ENCODE measurements at regions of chr9 and their contacts with region 1.

Region 1: DNA sequence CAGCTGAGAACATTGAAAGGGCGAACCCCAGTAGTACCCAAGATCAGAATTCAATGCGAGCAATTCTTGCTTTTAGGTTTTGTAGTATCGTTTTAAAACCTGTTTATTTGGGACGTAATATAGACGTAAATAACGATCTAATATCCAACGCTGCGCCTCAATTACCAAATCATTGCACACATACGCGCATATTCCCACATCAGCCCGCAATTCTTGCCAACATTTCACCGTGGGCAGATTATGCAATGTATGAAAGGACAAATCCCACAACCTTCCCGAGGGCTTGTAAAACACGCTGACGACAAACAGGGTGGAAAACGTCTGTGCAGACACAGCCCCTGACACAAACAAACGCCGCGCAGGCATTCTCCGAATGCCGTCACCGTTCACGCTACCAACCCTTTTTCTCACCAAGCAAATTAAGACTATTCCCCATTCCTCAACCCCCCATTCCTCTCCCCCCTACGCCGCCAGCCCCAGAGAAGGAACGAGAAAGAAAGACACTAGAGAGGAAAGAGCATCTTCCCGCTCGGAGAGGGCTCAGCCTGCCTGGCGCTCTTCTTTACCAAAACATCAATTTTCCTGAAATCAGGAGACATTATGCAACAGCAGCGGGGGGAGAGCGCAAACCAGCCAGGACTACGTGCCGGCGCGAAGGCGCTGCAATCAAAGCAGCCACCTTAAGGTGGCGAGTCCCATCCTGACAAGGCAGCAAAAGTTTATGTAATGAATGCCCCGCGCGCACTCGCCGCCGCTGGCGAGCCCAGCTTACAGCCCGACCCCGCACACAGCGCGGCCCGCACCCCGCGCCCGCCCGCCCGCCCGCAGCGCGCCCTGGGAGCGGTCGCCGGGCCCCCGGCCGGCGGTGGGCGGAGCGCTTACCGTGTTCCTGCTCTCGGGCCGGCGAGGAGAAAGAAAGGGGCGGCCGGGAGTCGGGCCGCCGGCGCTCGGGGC is 597 bp downstream of the NFIL3 start:
- DNase-seq: peak; percentile 60 to 80
- ATAC-seq: peak; percentile 12 to 40 (median 26)
- H3K4me3 ChIP-seq: peak overlapping the region; percentile 87
- H3K27ac ChIP-seq: peak overlapping the region; percentile 95
- H3K4me1 ChIP-seq: peaks cover 24% of the 10 kb centered on the region
- H3K27me3 ChIP-seq: no peaks in the 10 kb centered on the region
- CTCF ChIP-seq: peak; percentile 39

Region 2: DNA sequence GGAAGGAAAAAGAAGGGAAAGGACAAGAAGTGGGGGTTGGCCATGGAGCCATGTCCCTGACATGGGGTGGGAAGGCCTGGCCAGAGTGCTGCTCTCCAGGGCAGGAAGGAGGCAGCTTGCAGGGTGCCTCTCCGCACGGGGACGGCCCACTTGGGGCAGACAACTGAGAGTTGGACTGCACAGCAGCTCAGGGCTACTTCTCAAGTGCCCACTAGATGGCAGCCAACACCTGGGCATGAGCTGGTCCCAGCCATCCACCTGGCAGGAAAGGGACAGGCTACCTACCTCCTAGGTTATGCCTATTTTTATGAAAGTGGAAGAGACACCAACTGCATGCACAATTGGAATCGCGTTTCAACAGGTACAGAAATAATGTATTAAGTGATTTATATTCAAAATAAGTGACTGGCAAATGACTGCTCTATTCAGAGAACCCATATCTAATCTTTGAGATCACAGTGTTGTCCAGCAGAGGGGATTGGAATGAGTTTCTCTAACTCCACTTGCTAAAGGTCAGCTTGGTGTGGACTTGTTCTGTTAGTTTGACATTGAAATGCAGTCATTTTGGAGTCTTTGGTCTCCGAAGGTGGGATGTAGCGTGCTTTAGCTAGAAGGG is 508.1 kb before region 1 on chr9:
- intact Hi-C with region 1: loop called (anchors 2 kb)
- DNase-seq: peak; percentile 67 to 84
- ATAC-seq: peak; percentile 84 to 96 (median 88)
- H3K4me3 ChIP-seq: no peak overlapping the region
- H3K27ac ChIP-seq: no peak overlapping the region
- H3K4me1 ChIP-seq: peaks cover 8% of the 10 kb centered on the region
- H3K27me3 ChIP-seq: no peaks in the 10 kb centered on the region
- CTCF ChIP-seq: peak; percentile 92

Region 3: GRCh38 chr9:91036826-91037510 is 386.1 kb before region 1 on chr9:
- intact Hi-C with region 1: loop called in 1 of 2 experiments (anchors 2 kb)
- DNase-seq: peak; percentile 79 to 88
- ATAC-seq: peak; percentile 93 to 99 (median 96)
- H3K4me3 ChIP-seq: no peak overlapping the region
- H3K27ac ChIP-seq: no peak overlapping the region
- H3K4me1 ChIP-seq: peaks cover 4% of the 10 kb centered on the region
- H3K27me3 ChIP-seq: no peaks in the 10 kb centered on the region
- CTCF ChIP-seq: peak; percentile 67

Region 4: DNA sequence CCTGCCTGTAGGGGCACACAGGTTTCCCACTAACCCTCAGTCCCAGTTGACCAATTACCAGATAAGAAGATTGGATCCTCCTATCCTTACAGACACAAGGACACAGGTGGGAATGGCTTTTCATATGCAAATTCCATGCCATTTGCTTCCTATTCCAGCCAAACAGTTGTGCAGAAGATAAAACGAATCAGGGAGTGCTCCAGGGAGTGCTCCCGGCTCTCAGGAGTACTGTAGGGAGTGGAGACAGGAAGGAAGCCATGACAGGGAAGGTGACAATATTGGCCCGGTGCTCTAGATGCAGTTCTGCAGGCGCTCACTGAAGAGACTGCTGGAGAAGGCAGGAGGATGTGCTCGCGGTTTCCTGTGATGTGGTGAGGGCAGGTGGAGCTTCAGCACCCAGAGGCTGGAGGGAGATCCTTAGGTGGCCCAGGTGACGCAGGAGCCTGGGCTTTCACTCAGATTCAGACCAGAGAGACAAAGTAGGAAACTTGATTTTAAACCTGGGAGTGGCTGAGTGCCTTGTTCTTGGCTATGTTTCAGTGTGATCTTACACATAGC is 321.3 kb before region 1 on chr9:
- intact Hi-C with region 1: loop called in 1 of 2 experiments (anchors 5 kb)
- DNase-seq: no peak
- ATAC-seq: no peak
- H3K4me3 ChIP-seq: no peak overlapping the region
- H3K27ac ChIP-seq: peak overlapping the region; percentile 92
- H3K4me1 ChIP-seq: peaks cover 25% of the 10 kb centered on the region
- H3K27me3 ChIP-seq: no peaks in the 10 kb centered on the region
- CTCF ChIP-seq: no peak

Region 5: GRCh38 chr9:91301161-91301560 is 121.9 kb before region 1 on chr9:
- intact Hi-C with region 1: loop called in 1 of 2 experiments (anchors 5 kb)
- DNase-seq: no peak
- ATAC-seq: peak in 3 of 4 donors; percentile 35 to 46 (median 39)
- H3K4me3 ChIP-seq: no peak overlapping the region
- H3K27ac ChIP-seq: peak overlapping the region; percentile 91
- H3K4me1 ChIP-seq: peaks cover 53% of the 10 kb centered on the region
- H3K27me3 ChIP-seq: no peaks in the 10 kb centered on the region
- CTCF ChIP-seq: no peak